Body of pancreas (tissue), 4 donors: ENCODE measurements at regions of chr2 and their contacts with region 1.

Region 1: DNA sequence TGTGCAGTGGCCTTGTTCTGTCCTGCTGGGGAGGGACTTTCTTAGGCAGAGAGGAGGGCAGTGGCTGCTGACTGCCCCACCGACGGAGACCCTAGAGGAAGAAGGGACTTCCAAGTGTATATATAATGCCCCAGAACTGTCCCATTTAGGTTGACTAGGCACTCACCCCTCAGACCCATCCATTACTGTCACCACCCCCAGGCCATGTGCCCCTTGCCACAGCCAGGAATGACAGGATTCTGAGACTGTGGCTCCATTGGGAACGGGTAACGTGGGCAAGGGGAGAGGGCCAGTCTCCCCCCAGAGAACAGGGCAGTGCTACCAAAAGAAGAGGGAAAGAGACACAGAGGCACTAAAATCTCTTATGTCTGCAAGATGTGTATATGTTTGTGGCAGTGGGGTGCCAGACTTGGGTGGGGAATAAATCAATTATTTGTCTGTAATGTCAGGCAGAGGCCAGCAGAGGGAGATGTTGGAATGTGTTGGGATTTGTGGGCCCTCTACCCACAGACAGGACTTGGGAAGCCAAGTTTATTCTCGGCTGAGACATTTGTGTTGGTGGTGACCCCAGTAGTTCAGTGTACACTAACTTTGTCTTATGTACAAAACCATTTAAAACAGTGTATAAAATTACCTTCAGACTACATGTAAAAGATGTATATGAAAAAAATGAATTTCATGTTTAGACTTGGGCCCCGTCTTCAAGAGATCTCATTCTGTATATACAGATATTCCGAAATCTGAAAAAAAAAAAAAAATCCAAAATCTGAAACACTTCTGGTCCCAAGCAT is 24.0 kb upstream of the TMEM37 start:
- DNase-seq: peak; percentile 56 to 71 (median 62)
- ATAC-seq: peak; percentile 83
- H3K4me3 ChIP-seq: no peak overlapping the region
- H3K27ac ChIP-seq: no peak overlapping the region
- H3K4me1 ChIP-seq: peaks cover 10% of the 10 kb centered on the region
- H3K27me3 ChIP-seq: no peaks in the 10 kb centered on the region
- CTCF ChIP-seq: peak; percentile 57 to 96 (median 92)
- POLR2A ChIP-seq: no peak

Region 2: DNA sequence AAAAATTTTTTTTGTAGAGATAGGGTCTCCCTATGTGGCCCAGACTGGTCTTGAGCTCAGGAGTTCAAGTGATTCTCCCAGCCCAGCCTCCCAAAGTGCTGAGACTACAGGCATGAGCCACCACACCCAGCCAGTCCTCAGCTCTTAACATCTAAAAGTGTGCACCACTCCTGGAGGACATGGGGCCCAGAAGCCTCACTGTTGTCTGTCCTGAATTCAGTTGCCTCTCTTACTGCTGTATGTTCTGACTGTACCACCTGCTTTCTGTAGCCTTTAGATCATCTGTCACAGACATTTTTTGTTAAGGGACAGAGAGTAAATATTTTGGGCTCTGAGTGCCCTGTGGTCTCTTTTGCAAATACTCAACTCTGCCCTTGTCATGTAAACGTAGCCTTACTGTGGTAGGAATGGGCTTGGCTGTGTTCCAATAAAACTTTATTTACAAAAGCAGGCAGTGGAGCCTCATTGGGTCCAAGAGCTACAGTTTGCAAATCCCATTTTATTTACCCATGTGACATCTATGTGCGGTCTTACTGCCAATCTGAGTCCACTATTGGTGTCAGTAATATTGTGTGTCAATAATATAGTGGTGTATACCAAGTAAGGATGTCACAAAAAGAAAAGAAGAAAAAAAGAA is 62.2 kb after region 1 on chr2:
- intact Hi-C with region 1: loop called (anchors 5 kb)
- DNase-seq: no peak
- ATAC-seq: no peak
- H3K4me3 ChIP-seq: no peak overlapping the region
- H3K27ac ChIP-seq: no peak overlapping the region
- H3K4me1 ChIP-seq: peaks cover 3% of the 10 kb centered on the region
- H3K27me3 ChIP-seq: no peaks in the 10 kb centered on the region
- CTCF ChIP-seq: no peak
- POLR2A ChIP-seq: no peak

Region 3: DNA sequence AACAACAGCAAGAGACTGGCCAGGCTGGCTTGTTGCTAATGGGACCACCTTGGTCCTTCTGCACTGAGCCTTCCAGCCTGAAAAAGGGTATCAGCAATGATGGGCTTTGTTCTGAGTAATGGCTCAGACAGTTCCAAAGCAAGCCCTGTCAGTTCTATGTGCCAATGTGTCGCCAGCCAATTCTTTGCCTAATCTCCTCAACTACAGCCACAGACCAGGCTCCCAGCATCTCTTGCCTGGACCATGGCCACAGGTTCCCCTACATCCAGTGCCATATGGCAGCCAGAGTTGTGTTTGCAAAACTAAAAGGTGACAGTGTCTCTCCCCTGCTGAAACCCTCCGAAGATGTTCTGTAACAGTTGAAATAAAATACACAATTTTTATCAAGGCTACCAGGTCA is 209.8 kb after region 1 on chr2:
- intact Hi-C with region 1: no loop called
- DNase-seq: no peak
- ATAC-seq: no peak
- H3K4me3 ChIP-seq: no peak overlapping the region
- H3K27ac ChIP-seq: no peak overlapping the region
- H3K4me1 ChIP-seq: no peaks in the 10 kb centered on the region
- H3K27me3 ChIP-seq: no peaks in the 10 kb centered on the region
- CTCF ChIP-seq: no peak
- POLR2A ChIP-seq: no peak

Region 4: GRCh38 chr2:119659601-119660342 is 252.1 kb after region 1 on chr2:
- intact Hi-C with region 1: loop called (anchors 10 kb)
- DNase-seq: peak; percentile 44 to 63 (median 60)
- ATAC-seq: peak; percentile 62
- H3K4me3 ChIP-seq: no peak overlapping the region
- H3K27ac ChIP-seq: no peak overlapping the region
- H3K4me1 ChIP-seq: no peaks in the 10 kb centered on the region
- H3K27me3 ChIP-seq: no peaks in the 10 kb centered on the region
- CTCF ChIP-seq: peak; percentile 73 to 90 (median 82)
- POLR2A ChIP-seq: no peak